ENCODE measurements at regions of chr3 and their contacts with region 1.

Region 1: DNA sequence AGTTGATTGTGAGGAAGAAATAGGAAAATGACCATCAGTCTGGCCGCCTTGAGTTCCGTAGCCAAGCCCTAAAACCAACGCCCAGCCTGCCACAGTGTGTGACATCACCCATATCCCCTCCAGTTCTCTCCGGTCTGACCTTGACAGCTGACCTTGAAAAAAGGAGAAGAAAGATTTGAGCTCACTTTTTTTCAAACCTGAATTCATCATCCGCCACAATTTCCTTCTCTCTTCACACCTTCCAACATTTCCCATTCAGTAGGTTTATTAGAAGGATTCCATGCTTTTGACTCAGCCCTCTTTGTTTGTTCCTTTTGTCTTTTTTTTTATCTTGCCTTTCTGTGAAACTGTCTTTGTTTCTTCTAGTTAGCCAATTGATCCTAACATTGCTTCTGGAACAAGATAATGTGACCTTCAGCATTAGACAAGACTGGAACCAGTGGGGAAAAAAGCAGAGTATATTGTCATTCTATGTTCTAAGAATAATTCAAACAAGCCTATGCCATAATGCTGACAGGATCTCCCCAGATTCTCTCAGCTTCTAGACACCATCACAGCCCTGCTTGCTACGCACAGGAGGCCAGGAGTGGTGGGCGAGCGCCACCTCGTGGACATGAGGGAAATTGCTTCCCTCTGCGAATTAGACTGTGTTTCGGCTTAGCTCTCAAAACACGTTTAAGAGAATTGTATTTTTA is 283.1 kb downstream of the FGF12 start:
- DNase-seq: peak; percentile 74
- ATAC-seq: peak; percentile 87
- H3K4me3 Mint-ChIP-seq: no peak overlapping the region
- H3K27ac Mint-ChIP-seq: no peak overlapping the region
- H3K4me1 Mint-ChIP-seq: peaks cover 26% of the 10 kb centered on the region
- H3K27me3 Mint-ChIP-seq: no peaks in the 10 kb centered on the region
- CTCF ChIP-seq: peak; percentile 98

Region 2: GRCh38 chr3:192188218-192188835 is 255.9 kb before region 1 on chr3:
- CTCF ChIA-PET with region 1: interaction called, 12 read pairs
- POLR2A ChIA-PET with region 1: no interaction called
- DNase-seq: peak; percentile 77
- ATAC-seq: peak; percentile 77
- H3K4me3 Mint-ChIP-seq: no peak overlapping the region
- H3K27ac Mint-ChIP-seq: no peak overlapping the region
- H3K4me1 Mint-ChIP-seq: peaks cover 26% of the 10 kb centered on the region
- H3K27me3 Mint-ChIP-seq: no peaks in the 10 kb centered on the region; the same call in 1 of the 2 replicates
- CTCF ChIP-seq: peak; percentile 74

Region 3: GRCh38 chr3:192339214-192339613 is 105.0 kb before region 1 on chr3:
- CTCF ChIA-PET with region 1: interaction called, 12 read pairs
- POLR2A ChIA-PET with region 1: interaction called, 3 read pairs
- DNase-seq: no peak
- ATAC-seq: peak; percentile 95
- H3K4me3 Mint-ChIP-seq: no peak overlapping the region
- H3K27ac Mint-ChIP-seq: no peak overlapping the region
- H3K4me1 Mint-ChIP-seq: peaks cover 11% of the 10 kb centered on the region
- H3K27me3 Mint-ChIP-seq: no peaks in the 10 kb centered on the region
- CTCF ChIP-seq: no peak

Region 4: GRCh38 chr3:192364316-192364715 is 79.9 kb before region 1 on chr3:
- CTCF ChIA-PET with region 1: interaction called, 10 read pairs
- POLR2A ChIA-PET with region 1: no interaction called
- DNase-seq: no peak
- ATAC-seq: no peak
- H3K4me3 Mint-ChIP-seq: no peak overlapping the region
- H3K27ac Mint-ChIP-seq: no peak overlapping the region
- H3K4me1 Mint-ChIP-seq: peaks cover 39% of the 10 kb centered on the region
- H3K27me3 Mint-ChIP-seq: no peaks in the 10 kb centered on the region
- CTCF ChIP-seq: no peak

Region 5: GRCh38 chr3:192409357-192409824 is 34.9 kb before region 1 on chr3:
- CTCF ChIA-PET with region 1: interaction called, 16 read pairs
- POLR2A ChIA-PET with region 1: no interaction called
- DNase-seq: peak; percentile 65
- ATAC-seq: peak; percentile 52
- H3K4me3 Mint-ChIP-seq: peak overlapping the region; percentile 93
- H3K27ac Mint-ChIP-seq: no peak overlapping the region; the same call in 1 of the 2 replicates
- H3K4me1 Mint-ChIP-seq: peaks cover 57% of the 10 kb centered on the region
- H3K27me3 Mint-ChIP-seq: peaks cover 69% of the 10 kb centered on the region
- CTCF ChIP-seq: no peak

Region 6: GRCh38 chr3:192423003-192423349 is 21.3 kb before region 1 on chr3:
- CTCF ChIA-PET with region 1: interaction called, 15 read pairs
- POLR2A ChIA-PET with region 1: no interaction called
- DNase-seq: no peak
- ATAC-seq: peak; percentile 52
- H3K4me3 Mint-ChIP-seq: no peak overlapping the region
- H3K27ac Mint-ChIP-seq: no peak overlapping the region
- H3K4me1 Mint-ChIP-seq: peaks cover 40% of the 10 kb centered on the region
- H3K27me3 Mint-ChIP-seq: peaks cover 11% of the 10 kb centered on the region
- CTCF ChIP-seq: peak; percentile 11; the same call in 1 of the 2 replicates

Region 7: GRCh38 chr3:192433704-192434103 is 10.5 kb before region 1 on chr3:
- CTCF ChIA-PET with region 1: interaction called, 26 read pairs
- POLR2A ChIA-PET with region 1: no interaction called
- DNase-seq: no peak
- ATAC-seq: no peak
- H3K4me3 Mint-ChIP-seq: no peak overlapping the region
- H3K27ac Mint-ChIP-seq: 0 out of 2 replicates have a peak overlapping the region, but pooled peaks have one; percentile 8
- H3K4me1 Mint-ChIP-seq: peaks cover 14% of the 10 kb centered on the region
- H3K27me3 Mint-ChIP-seq: no peaks in the 10 kb centered on the region
- CTCF ChIP-seq: no peak

Region 8: DNA sequence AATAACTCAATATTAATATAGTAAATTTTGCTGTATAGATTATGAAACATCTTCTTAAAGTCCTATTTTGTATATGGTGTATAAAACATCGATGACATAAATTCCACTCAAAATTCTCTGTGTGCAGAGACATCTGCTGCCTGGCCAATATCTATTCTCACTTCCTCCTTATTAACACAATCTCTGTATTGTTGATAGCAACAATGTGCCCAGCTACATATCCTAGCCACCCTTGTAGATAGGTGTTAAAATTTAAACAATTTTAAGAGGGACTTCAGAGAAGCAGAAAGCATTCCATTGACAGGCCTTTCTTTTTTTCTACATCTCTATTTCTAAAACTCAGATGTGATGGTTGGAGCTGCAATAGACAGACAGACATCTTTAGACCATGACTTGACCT is 210.8 kb after region 1 on chr3:
- CTCF ChIA-PET with region 1: no interaction called
- POLR2A ChIA-PET with region 1: no interaction called
- DNase-seq: no peak
- ATAC-seq: no peak
- H3K4me3 Mint-ChIP-seq: no peak overlapping the region
- H3K27ac Mint-ChIP-seq: no peak overlapping the region
- H3K4me1 Mint-ChIP-seq: peaks cover 16% of the 10 kb centered on the region
- H3K27me3 Mint-ChIP-seq: no peaks in the 10 kb centered on the region
- CTCF ChIP-seq: no peak

Measured in WTC11 (cell line).